PC-3 (cell line): ENCODE measurements at regions of chr2 and their contacts with region 1.

Region 1: DNA sequence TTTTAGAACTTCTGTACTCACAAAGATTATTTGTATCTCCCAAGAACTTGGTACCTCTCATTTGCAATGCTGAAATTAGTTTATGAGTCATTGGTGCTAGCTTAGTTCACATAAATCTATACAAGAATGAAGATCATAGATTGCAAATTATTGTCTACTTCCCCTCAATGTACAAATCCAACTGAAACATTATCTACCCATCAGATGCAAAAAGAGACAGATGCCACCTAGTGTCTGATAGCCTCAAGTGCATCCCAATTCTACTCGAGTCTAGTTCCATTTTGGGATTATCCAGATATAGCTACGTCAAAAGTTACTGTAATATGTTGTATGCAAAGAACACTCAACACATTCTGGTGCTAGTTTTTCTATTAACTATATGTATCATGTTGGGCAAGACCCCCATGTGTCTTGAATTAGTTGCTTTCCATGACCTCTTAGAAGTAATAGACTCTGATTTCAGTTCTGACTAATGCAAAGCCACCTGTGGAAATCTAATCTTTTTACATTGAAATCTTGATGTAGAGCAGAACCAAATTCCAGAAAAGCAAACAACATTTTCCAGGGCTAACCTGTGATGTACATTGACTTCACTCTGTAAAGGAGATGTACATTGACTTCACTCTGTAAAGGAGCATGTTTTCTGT is 210.0 kb downstream of the RBM43 start:
- DNase-seq: peak; percentile 80
- ATAC-seq: peak; percentile 27
- H3K4me3 ChIP-seq: no peak overlapping the region
- H3K27ac ChIP-seq: no peak overlapping the region
- H3K4me1 ChIP-seq: peaks cover 46% of the 10 kb centered on the region
- H3K27me3 ChIP-seq: no peaks in the 10 kb centered on the region
- CTCF ChIP-seq: peak; percentile 94

Region 2: DNA sequence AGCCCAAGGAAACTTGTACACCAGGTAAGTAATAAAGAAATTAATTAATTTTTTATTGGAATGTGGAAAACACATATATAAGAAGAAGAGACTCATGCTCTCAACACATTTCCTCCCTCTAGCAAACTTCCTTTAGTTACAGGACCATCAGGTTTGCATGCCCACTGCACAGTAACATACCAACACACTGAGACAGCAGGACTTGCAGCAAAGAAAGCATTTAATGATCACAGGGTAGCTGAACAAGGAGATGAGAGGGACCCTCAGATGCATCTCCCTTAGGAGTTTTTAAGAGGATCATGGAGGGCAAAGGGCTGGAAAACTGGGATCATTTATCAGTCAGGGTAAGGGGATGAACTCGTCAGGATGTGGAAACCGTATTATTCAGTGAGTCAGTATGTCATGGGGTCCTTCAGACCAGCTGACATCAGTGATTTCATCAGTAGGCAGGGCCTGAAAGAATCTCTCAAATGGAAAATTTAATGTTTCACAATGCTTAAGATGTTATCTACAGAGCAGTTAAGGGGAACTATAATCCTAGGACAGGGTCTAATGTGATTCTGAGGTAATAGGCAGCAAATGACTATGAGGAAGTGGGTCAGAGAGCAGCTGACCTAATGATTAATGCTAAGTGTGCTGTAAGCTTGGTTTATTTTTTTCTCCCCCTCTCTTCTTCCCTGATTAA is 370.4 kb before region 1 on chr2:
- CTCF ChIA-PET with region 1: no interaction called
- POLR2A ChIA-PET with region 1: no interaction called
- intact Hi-C with region 1: loop called (anchors 10 kb)
- DNase-seq: peak; percentile 86
- ATAC-seq: peak; percentile 79
- H3K4me3 ChIP-seq: no peak overlapping the region
- H3K27ac ChIP-seq: peak overlapping the region; percentile 93
- H3K4me1 ChIP-seq: peaks cover 45% of the 10 kb centered on the region
- H3K27me3 ChIP-seq: no peaks in the 10 kb centered on the region
- CTCF ChIP-seq: no peak

Region 3: GRCh38 chr2:150931451-150931850 is 120.2 kb before region 1 on chr2:
- CTCF ChIA-PET with region 1: no interaction called
- POLR2A ChIA-PET with region 1: no interaction called
- intact Hi-C with region 1: no loop called
- DNase-seq: no peak
- ATAC-seq: no peak
- H3K4me3 ChIP-seq: no peak overlapping the region
- H3K27ac ChIP-seq: no peak overlapping the region
- H3K4me1 ChIP-seq: peaks cover 4% of the 10 kb centered on the region; the same call in 1 of the 2 replicates
- H3K27me3 ChIP-seq: no peaks in the 10 kb centered on the region
- CTCF ChIP-seq: no peak

Region 4: GRCh38 chr2:150944315-150944714 is 107.4 kb before region 1 on chr2:
- CTCF ChIA-PET with region 1: no interaction called
- POLR2A ChIA-PET with region 1: no interaction called
- intact Hi-C with region 1: loop called (anchors 5 kb)
- DNase-seq: no peak
- ATAC-seq: no peak
- H3K4me3 ChIP-seq: no peak overlapping the region
- H3K27ac ChIP-seq: no peak overlapping the region
- H3K4me1 ChIP-seq: no peaks in the 10 kb centered on the region
- H3K27me3 ChIP-seq: no peaks in the 10 kb centered on the region
- CTCF ChIP-seq: no peak

Region 5: GRCh38 chr2:151161821-151162551 is 110.3 kb after region 1 on chr2:
- CTCF ChIA-PET with region 1: no interaction called
- POLR2A ChIA-PET with region 1: no interaction called
- intact Hi-C with region 1: loop called (anchors 1 kb)
- DNase-seq: peak; percentile 51
- ATAC-seq: peak; percentile 70
- H3K4me3 ChIP-seq: no peak overlapping the region
- H3K27ac ChIP-seq: no peak overlapping the region
- H3K4me1 ChIP-seq: no peaks in the 10 kb centered on the region
- H3K27me3 ChIP-seq: no peaks in the 10 kb centered on the region
- CTCF ChIP-seq: peak; percentile 60

Region 6: DNA sequence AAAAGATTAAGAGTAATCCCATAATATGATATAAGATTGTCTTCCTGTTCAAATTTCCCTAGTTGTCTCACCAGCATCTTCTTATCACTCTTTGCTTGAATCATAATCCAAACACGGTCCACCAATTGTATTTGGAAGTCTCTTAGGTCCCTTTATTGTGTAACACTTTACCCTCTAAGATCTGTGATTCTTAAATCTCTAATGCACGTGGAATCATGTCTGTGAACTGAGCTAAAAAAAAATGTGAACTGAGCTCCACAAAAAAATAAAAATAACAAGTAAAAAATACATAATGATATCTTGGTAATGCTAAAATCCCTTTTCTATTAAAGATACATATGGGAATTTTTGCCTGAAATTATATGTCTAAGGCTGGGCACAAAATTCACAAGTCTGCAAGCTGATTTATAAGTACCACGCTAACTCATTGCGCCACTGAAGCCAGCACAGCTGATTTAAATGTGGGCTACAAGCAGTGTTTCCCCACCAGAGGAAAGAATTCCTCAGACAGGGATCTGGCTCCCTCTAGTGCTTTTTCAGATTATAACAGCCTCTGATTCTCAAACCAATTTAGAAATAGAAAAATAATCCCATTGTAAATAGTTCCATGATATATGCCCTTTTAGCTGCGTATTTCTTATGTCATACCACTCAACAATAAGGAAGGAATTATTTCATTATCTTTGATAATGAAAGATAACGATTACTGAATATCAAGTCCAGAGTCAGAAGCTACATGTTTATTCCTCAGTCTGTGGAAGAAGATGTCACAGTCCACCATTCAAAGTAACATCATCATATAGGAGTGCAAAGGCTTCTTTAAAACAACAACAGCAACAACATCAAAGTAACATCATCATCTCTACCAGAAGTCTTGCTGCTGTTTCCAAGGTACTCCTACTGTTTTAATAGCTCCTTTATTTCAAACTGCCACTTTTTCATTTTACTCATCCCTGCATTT is 187.1 kb after region 1 on chr2:
- CTCF ChIA-PET with region 1: interaction called, 3 read pairs
- POLR2A ChIA-PET with region 1: no interaction called
- intact Hi-C with region 1: loop called (anchors 5 kb)
- DNase-seq: peak; percentile 86
- ATAC-seq: peak; percentile 52
- H3K4me3 ChIP-seq: no peak overlapping the region
- H3K27ac ChIP-seq: peak overlapping the region; percentile 7
- H3K4me1 ChIP-seq: peaks cover 27% of the 10 kb centered on the region
- H3K27me3 ChIP-seq: no peaks in the 10 kb centered on the region
- CTCF ChIP-seq: peak; percentile 91